ENCODE measurements at regions of chr3 and their contacts with region 1.

Region 1: GRCh38 chr3:136792556-136793330 is 26.2 kb upstream of the SLC35G2 start:
- DNase-seq: no peak
- ATAC-seq: no peak
- H3K4me3 ChIP-seq: no peak overlapping the region
- H3K4me3 Mint-ChIP-seq: no peak overlapping the region
- H3K27ac ChIP-seq: no peak overlapping the region
- H3K27ac Mint-ChIP-seq: no peak overlapping the region
- H3K4me1 ChIP-seq: no peaks in the 10 kb centered on the region
- H3K4me1 Mint-ChIP-seq: no peaks in the 10 kb centered on the region
- H3K27me3 ChIP-seq: peaks cover 0 to 2% of the 10 kb centered on the region in 2 experiments
- H3K27me3 Mint-ChIP-seq: peaks cover 5 to 8% of the 10 kb centered on the region in 2 donors

Region 2: GRCh38 chr3:136577792-136578191 is 215.0 kb before region 1 on chr3:
- CTCF ChIA-PET with region 1: interaction called in 1 of 2 experiments, 15 read pairs
- POLR2A ChIA-PET with region 1: no interaction called
- DNase-seq: no peak
- ATAC-seq: no peak
- H3K4me3 ChIP-seq: no peak overlapping the region
- H3K4me3 Mint-ChIP-seq: no peak overlapping the region
- H3K27ac ChIP-seq: no peak overlapping the region
- H3K27ac Mint-ChIP-seq: no peak overlapping the region
- H3K4me1 ChIP-seq: no peaks in the 10 kb centered on the region
- H3K4me1 Mint-ChIP-seq: no peaks in the 10 kb centered on the region
- H3K27me3 ChIP-seq: no peaks in the 10 kb centered on the region
- H3K27me3 Mint-ChIP-seq: no peaks in the 10 kb centered on the region

Region 3: GRCh38 chr3:137097386-137097785 is 304.6 kb after region 1 on chr3:
- CTCF ChIA-PET with region 1: no interaction called
- POLR2A ChIA-PET with region 1: interaction called in 1 of 2 experiments, 11 read pairs
- DNase-seq: no peak
- ATAC-seq: no peak
- H3K4me3 ChIP-seq: no peak overlapping the region
- H3K4me3 Mint-ChIP-seq: no peak overlapping the region
- H3K27ac ChIP-seq: no peak overlapping the region
- H3K27ac Mint-ChIP-seq: no peak overlapping the region
- H3K4me1 ChIP-seq: no peaks in the 10 kb centered on the region
- H3K4me1 Mint-ChIP-seq: no peaks in the 10 kb centered on the region
- H3K27me3 ChIP-seq: peaks cover 2 to 5% of the 10 kb centered on the region in 2 experiments
- H3K27me3 Mint-ChIP-seq: peaks cover 13 to 24% of the 10 kb centered on the region in 2 donors